ENCODE measurements at regions of chr12 and their contacts with region 1.

Region 1: DNA sequence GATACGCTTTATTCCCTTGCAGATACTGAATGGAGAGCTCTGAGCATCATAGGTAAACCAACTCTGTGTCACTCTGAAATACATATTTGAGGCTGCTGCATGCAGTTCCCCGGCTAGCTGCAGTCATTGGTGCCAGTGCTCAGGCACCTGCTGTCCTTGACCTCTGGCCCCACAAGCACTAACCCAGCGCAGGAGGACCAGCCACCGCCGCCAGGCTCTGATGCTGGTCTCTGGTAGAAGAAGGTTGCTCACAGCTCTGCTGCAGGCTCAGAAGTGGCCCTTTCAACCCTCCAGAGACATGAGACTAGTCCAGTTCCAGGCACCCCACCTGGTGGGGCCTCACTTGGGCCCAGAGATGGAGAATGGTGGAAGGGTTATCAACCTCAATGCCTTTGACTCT is 34.5 kb upstream of the PTPRB start:
- DNase-seq: no peak
- H3K4me3 ChIP-seq: no peak overlapping the region
- H3K27ac ChIP-seq: no peak overlapping the region
- H3K4me1 ChIP-seq: no peaks in the 10 kb centered on the region
- H3K27me3 ChIP-seq: no peaks in the 10 kb centered on the region
- CTCF ChIP-seq: no peak

Region 2: GRCh38 chr12:70451528-70451927 is 220.2 kb before region 1 on chr12:
- CTCF ChIA-PET with region 1: no interaction called
- POLR2A ChIA-PET with region 1: no interaction called
- intact Hi-C with region 1: no loop called
- DNase-seq: no peak
- H3K4me3 ChIP-seq: no peak overlapping the region
- H3K27ac ChIP-seq: no peak overlapping the region
- H3K4me1 ChIP-seq: no peaks in the 10 kb centered on the region
- H3K27me3 ChIP-seq: no peaks in the 10 kb centered on the region
- CTCF ChIP-seq: no peak

Region 3: GRCh38 chr12:70466753-70467152 is 204.9 kb before region 1 on chr12:
- CTCF ChIA-PET with region 1: interaction called, 10 read pairs
- POLR2A ChIA-PET with region 1: no interaction called
- intact Hi-C with region 1: no loop called
- DNase-seq: no peak
- H3K4me3 ChIP-seq: no peak overlapping the region
- H3K27ac ChIP-seq: no peak overlapping the region
- H3K4me1 ChIP-seq: no peaks in the 10 kb centered on the region
- H3K27me3 ChIP-seq: no peaks in the 10 kb centered on the region
- CTCF ChIP-seq: no peak

Measured in A673 (cell line).